Left cardiac atrium (tissue), 4 donors: ENCODE measurements at regions of chr21 and their contacts with region 1.

Region 1: GRCh38 chr21:36747815-36748383 is 49.0 kb downstream of the SIM2 start:
- DNase-seq: no peak
- ATAC-seq: peak; percentile 42 to 56

Region 2: DNA sequence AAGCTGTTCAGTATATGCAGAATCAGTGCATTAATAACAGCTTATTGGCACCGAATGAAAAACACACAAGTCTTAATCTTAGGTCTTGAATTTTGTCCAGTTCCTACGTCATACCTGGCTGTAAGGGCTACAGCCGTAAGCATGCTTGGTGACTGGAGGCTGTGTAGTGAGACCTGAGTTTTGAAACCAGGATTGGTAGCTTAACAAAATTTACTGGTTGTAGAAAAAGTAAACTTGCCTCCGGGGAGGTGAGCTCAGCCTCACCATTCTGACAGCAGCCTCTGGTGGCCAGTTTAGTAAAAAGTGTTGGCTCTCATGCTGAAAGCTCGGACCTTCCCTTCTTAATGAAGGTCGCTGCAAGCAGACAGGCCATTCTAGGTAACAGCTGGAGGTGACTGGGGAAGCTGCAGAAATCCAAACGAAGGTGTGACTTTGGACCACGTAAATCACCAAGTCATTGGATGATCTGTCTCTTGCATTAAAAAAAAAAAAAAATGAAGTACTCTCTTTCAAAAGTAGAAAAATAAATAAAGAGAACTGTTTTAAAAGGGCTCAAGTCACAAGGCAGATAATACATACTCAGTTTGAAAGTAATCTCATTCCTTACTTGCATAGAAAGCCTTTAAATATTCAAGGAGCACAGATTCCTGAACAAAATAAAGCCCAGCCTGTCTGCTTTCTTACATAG is 169.7 kb after region 1 on chr21:
- intact Hi-C with region 1: loop called (anchors 5 to 10 kb)
- DNase-seq: peak; percentile 34
- ATAC-seq: peak; percentile 68 to 73